ENCODE measurements at regions of chr11 and their contacts with region 1.

Region 1: DNA sequence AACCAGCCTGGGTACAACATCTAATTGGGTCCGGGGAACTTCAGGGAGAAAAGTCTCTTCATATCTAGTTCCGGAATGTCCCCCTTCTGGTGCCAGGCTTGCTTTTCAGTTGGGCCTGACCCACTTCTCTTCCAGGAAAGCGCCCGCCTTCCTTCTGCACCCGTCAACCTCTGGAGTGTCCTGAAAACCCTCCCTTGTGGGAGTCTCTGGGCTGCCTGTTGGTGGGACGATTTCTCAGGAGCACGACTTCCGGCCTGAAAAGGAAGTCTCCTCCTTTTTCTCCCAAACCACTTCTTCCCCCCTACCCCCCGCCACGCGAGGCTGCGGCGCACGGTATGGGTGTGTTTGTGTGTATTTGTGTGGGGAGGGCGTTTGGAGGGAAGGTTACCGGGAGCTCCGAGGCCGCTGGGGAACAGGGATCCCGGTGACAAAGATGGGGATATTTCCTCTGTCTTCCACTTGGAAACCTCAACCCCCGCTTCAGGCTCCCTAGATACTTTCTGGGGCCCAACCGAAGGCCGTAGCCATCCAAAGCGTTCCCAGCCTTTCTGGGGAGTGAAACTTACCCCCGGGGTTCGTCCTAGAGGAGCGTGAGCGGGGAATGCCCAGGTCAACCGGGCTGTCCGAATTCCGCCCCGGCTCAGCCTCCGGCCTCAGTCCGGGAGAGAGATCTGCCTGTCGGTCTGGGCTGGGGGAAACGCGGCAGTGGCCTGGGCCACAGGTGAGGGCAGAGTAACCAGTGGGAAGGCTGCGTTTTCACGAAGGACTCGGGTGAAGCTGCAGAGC is at the start of gene NKAPD1:
- DNase-seq: peak; percentile 73 to 84
- ATAC-seq: peak; percentile 85 to 95 (median 88)
- H3K4me3 ChIP-seq: peak within 1 kb of the TSS; percentile 92
- H3K27ac ChIP-seq: peak within 1 kb of the TSS; percentile 94
- H3K4me1 ChIP-seq: peaks cover 14% of the 10 kb centered on the region
- H3K27me3 ChIP-seq: no peaks in the 10 kb centered on the region
- CTCF ChIP-seq: no peak
- total RNA-seq, gene NKAPD1: 9.3 to 13.8 (median 10.8) TPM

Region 2: DNA sequence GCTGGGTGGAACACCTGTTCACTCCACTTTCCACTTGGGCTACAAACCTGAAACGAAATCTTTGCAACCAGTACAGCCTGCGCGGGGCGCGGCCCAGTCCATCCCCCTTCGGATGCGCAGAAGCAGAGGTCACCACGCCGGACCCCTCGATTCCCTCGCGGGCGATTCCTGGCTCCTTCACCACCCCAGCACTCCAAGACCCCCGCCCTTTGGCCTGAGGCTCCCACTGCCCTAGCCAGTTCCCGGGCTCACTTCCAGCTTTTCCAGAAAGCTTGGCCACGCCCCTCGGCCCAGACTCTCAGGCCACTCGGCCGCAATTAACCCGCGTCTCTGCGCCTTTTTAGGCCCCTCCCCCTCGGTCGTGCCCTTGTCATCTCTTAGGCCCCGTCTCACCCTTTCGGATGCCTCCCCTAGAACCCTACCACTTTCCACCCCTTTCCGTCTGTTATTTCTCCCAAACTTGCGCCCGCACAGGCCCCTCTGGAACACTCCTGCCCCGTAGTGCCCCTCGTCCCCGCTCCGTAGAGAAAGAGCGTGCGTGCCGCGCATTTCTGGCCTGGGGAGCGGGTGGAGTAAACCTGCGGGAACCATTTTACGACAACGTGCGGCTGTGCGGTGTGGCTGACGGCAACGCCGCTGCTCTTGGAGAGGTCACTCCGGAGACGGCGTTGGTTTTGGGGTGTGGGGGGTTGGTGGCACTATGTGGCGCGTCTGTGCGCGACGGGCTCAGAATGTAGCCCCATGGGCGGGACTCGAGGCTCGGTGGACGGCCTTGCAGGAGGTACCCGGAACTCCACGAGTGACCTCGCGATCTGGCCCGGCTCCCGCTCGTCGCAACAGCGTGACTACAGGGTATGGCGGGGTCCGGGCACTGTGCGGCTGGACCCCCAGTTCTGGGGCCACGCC is 49.2 kb before region 1 on chr11 and contains the start of gene DLAT:
- intact Hi-C with region 1: loop called in 1 of 2 experiments (anchors 5 kb)
- DNase-seq: peak; percentile 87 to 93
- ATAC-seq: peak; percentile 92 to 95 (median 94)
- H3K4me3 ChIP-seq: peak within 1 kb of the TSS; percentile 94
- H3K27ac ChIP-seq: peak within 1 kb of the TSS; percentile 95
- H3K4me1 ChIP-seq: peaks cover 3% of the 10 kb centered on the region
- H3K27me3 ChIP-seq: no peaks in the 10 kb centered on the region
- CTCF ChIP-seq: no peak
- total RNA-seq, gene DLAT: 61.2 to 167 (median 87.7) TPM